Naive thymus-derived CD4-positive, alpha-beta T cell (primary cell): ENCODE measurements at regions of chr2 and their contacts with region 1.

Region 1: DNA sequence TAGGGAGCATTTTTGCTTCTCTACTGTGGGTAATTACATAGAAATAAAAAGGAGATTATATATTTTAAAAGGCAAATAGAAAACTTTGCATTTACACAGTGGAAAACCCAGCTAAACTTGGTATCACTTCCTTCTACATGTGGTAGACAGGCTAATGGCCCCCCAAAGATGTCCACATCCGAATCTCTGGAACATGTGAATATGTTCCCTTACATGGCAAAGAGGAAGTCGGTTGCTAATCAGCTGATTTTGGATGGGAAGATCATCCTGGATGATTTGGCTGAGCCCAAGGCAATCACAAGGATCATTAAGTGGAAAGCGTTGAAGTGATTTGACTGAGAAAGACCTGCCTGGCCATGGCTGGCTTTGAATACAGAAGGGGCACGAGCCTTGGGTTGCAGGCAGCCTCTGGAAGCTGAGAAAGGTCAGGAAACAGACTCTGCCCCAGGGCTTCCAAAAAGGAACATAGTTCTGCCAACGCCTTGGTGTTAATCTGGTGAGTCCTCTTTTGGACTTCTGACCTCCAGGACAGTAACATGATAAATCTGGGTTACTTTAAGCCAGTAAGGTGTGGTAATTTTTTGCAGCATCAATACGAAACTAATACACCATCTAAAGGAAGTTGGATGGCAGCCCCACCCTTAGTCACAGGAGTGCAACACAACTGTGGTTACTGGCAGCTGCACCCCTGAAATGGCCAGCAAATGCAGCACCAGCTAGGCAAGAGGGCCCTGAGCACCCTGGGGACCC is 26.0 kb downstream of the CREG2 start:
- DNase-seq: peak in 5 of 9 donors; percentile 22 to 44 (median 26)
- ATAC-seq: peak; percentile 69
- H3K4me3 ChIP-seq: peak overlapping the region; percentile 24
- H3K4me3 Mint-ChIP-seq: peak overlapping the region; percentile 29 to 73 (median 56)
- H3K27ac ChIP-seq: no peak overlapping the region
- H3K27ac Mint-ChIP-seq: peak overlapping the region in 7 of 9 donors; percentile 4 to 84 (median 48)
- H3K4me1 ChIP-seq: peaks cover 18 to 26% of the 10 kb centered on the region in 2 donors
- H3K4me1 Mint-ChIP-seq: peaks cover 26 to 42% (median 29%) of the 10 kb centered on the region in 7 donors
- H3K27me3 ChIP-seq: no peaks in the 10 kb centered on the region
- H3K27me3 Mint-ChIP-seq: peaks cover 0 to 17% (median 0%) of the 10 kb centered on the region in 5 donors

Region 2: DNA sequence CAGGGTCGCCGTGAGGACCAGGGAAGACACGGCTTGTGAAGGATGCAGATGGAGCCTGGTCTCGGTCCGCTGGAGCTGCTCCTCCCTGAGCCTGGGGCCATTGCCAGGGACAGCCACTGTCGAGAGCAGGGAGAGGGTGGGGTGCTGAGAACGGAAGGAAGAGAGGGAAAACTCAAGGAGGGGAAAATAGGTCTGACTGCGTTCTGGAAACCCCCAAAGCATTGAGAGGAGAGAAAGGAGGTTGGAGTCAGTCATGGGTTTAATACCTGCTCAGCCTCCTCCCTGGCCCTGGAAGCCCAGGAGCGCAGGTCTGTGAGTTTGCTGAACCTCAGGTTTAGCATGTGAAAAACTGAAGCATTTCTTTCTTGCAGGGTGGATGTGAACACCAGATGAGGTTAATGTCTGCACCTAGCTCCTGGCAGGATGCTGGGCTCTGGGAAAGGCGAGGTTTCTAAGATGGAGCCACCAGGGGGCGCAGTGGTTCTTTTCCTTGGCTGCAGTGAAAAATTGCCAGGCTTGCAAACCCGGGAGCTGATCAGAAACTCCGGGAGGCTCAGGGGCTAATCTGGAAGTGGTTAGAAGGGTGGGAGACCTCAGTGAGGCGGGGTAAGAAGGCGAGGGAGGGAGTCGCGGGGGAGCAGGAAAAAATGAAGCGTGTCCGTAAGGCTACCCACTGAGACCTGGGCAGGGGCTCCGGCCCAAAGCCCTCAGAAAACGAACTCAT is 19.2 kb before region 1 on chr2:
- CTCF ChIA-PET with region 1: interaction called, 14 read pairs
- POLR2A ChIA-PET with region 1: interaction called, 5 read pairs
- intact Hi-C with region 1: loop called in 1 of 2 experiments (anchors 1 kb)
- DNase-seq: peak; percentile 32 to 73 (median 51)
- ATAC-seq: peak; percentile 76
- H3K4me3 ChIP-seq: no peak overlapping the region
- H3K4me3 Mint-ChIP-seq: peak overlapping the region in 4 of 10 donors; percentile 10 to 63 (median 18)
- H3K27ac ChIP-seq: no peak overlapping the region
- H3K27ac Mint-ChIP-seq: peak overlapping the region in 5 of 9 donors; percentile 9 to 68 (median 31)
- H3K4me1 ChIP-seq: peaks cover 6 to 21% of the 10 kb centered on the region in 2 donors
- H3K4me1 Mint-ChIP-seq: peaks cover 24 to 43% (median 32%) of the 10 kb centered on the region in 7 donors
- H3K27me3 ChIP-seq: no peaks in the 10 kb centered on the region
- H3K27me3 Mint-ChIP-seq: peaks cover 0 to 20% (median 0%) of the 10 kb centered on the region in 5 donors